Activated naive CD4-positive, alpha-beta T cell treated with anti-CD3 and anti-CD28 coated beads for 36 hours (primary cell): ENCODE measurements at regions of chr6 and their contacts with region 1.

Region 1: GRCh38 chr6:52337633-52338290 is 24.2 kb upstream of the PAQR8 start:
- DNase-seq: no peak
- H3K4me3 Mint-ChIP-seq: no peak overlapping the region
- H3K27ac Mint-ChIP-seq: no peak overlapping the region
- H3K4me1 Mint-ChIP-seq: peaks cover 56% of the 10 kb centered on the region
- H3K27me3 Mint-ChIP-seq: no peaks in the 10 kb centered on the region

Region 2: GRCh38 chr6:51949468-51949867 is 388.3 kb before region 1 on chr6:
- CTCF ChIA-PET with region 1: no interaction called
- intact Hi-C with region 1: no loop called
- DNase-seq: no peak
- H3K4me3 Mint-ChIP-seq: no peak overlapping the region
- H3K27ac Mint-ChIP-seq: no peak overlapping the region
- H3K4me1 Mint-ChIP-seq: no peaks in the 10 kb centered on the region
- H3K27me3 Mint-ChIP-seq: peaks cover 5% of the 10 kb centered on the region

Region 3: GRCh38 chr6:52304983-52305390 is 32.8 kb before region 1 on chr6:
- CTCF ChIA-PET with region 1: interaction called, 3 read pairs
- intact Hi-C with region 1: loop called (anchors 1 kb)
- DNase-seq: no peak
- H3K4me3 Mint-ChIP-seq: peak overlapping the region; percentile 27
- H3K27ac Mint-ChIP-seq: peak overlapping the region; percentile 77
- H3K4me1 Mint-ChIP-seq: peaks cover 65% of the 10 kb centered on the region
- H3K27me3 Mint-ChIP-seq: no peaks in the 10 kb centered on the region

Region 4: DNA sequence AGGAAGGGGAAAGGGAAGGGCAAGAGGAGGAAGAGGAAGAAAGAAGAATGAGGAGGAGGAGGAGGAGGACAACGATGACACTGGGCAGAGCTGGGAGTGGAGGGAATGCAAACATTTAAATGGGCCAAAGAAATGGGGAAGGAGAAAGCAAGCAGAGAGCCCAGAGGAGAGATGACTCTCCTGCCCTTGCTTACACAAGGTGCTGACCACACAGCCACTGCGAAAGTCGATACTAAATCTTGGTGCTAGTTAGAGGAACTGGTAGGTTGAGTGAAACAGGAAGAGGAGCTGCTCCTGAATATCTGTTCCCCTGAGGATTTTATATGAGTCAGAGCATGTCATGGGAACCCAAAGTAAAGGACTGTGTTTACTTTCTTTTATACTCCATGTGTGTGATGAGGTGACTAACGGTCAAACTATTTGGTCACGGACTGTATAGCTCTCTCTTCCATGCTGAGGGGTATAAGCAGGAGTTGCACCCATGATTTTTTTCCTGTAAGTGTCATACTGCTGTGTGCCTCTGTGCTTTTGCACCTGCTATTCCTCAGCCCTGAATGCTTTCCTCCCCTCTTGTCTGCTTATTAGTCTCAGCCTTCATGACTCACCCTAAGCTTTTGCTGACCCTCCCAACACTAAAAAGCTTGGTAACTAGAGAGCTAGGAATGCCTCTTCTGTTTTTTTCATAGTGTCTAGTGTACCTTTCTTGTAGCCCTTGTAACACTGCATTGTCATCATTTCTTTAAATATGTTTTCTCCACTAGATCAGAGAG is 14.7 kb after region 1 on chr6:
- CTCF ChIA-PET with region 1: interaction called, 7 read pairs
- intact Hi-C with region 1: loop called (anchors 1 kb)
- DNase-seq: no peak
- H3K4me3 Mint-ChIP-seq: no peak overlapping the region
- H3K27ac Mint-ChIP-seq: no peak overlapping the region
- H3K4me1 Mint-ChIP-seq: peaks cover 24% of the 10 kb centered on the region
- H3K27me3 Mint-ChIP-seq: no peaks in the 10 kb centered on the region